Caco-2 (cell line): ENCODE measurements at regions of chr12 and their contacts with region 1.

Region 1: GRCh38 chr12:47651368-47652254 is 54.2 kb downstream of the RPAP3 start:
- DNase-seq: peak; percentile 62 to 72
- H3K4me3 ChIP-seq: no peak overlapping the region
- H3K4me3 Mint-ChIP-seq: no peak overlapping the region
- H3K27ac Mint-ChIP-seq: peak overlapping the region; percentile 58
- H3K4me1 ChIP-seq: peaks cover 14% of the 10 kb centered on the region
- H3K4me1 Mint-ChIP-seq: peaks cover 6% of the 10 kb centered on the region
- H3K27me3 ChIP-seq: no peaks in the 10 kb centered on the region
- H3K27me3 Mint-ChIP-seq: no peaks in the 10 kb centered on the region
- CTCF ChIP-seq: peak; percentile 66 to 75

Region 2: DNA sequence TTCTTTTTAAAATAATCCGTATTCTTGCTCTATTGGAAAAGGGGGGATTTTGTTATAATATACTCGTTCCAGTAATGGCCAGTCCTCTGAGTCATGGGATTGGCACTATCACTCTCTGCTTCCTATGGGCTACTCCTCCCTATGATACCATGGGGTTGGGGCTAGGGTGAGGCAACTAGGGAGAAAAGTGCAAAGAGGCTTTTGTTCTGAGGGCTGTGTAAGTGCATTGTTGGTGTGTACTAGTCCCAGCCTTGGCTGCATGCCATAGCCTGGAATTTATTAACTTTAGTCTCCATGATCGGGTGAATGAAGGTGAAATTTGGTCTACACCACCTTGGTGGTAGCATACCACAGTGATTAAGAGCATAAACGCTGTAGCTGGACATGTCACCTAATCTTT is 193.3 kb before region 1 on chr12:
- CTCF ChIA-PET with region 1: no interaction called
- POLR2A ChIA-PET with region 1: no interaction called
- intact Hi-C with region 1: no loop called
- DNase-seq: no peak
- H3K4me3 ChIP-seq: no peak overlapping the region
- H3K4me3 Mint-ChIP-seq: no peak overlapping the region
- H3K27ac Mint-ChIP-seq: no peak overlapping the region
- H3K4me1 ChIP-seq: no peaks in the 10 kb centered on the region
- H3K4me1 Mint-ChIP-seq: no peaks in the 10 kb centered on the region
- H3K27me3 ChIP-seq: no peaks in the 10 kb centered on the region
- H3K27me3 Mint-ChIP-seq: peaks cover 15% of the 10 kb centered on the region
- CTCF ChIP-seq: no peak

Region 3: DNA sequence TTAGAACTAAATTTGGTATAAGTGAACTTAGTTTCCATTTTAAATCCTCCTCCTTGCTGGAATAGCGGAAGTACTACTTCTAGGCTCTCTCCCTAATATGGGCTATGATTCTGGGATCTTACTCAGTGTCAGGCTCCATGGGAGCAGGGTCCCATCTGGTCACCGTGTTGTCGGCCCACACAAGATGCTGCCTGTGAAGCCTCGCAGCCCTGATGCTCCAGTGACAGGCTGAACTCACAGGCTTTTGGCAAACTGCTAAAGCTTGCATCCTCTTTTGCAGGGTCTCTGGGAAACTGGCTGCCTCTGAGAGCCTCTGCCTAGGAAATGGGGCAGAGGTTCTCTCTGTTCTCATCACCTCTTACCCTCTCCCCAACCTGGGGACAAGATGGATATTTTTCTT is 34.1 kb before region 1 on chr12:
- CTCF ChIA-PET with region 1: no interaction called
- POLR2A ChIA-PET with region 1: no interaction called
- intact Hi-C with region 1: no loop called
- DNase-seq: no peak
- H3K4me3 ChIP-seq: no peak overlapping the region
- H3K4me3 Mint-ChIP-seq: no peak overlapping the region
- H3K27ac Mint-ChIP-seq: no peak overlapping the region
- H3K4me1 ChIP-seq: no peaks in the 10 kb centered on the region; the same call in 1 of the 2 replicates
- H3K4me1 Mint-ChIP-seq: no peaks in the 10 kb centered on the region
- H3K27me3 ChIP-seq: no peaks in the 10 kb centered on the region
- H3K27me3 Mint-ChIP-seq: no peaks in the 10 kb centered on the region
- CTCF ChIP-seq: no peak

Region 4: DNA sequence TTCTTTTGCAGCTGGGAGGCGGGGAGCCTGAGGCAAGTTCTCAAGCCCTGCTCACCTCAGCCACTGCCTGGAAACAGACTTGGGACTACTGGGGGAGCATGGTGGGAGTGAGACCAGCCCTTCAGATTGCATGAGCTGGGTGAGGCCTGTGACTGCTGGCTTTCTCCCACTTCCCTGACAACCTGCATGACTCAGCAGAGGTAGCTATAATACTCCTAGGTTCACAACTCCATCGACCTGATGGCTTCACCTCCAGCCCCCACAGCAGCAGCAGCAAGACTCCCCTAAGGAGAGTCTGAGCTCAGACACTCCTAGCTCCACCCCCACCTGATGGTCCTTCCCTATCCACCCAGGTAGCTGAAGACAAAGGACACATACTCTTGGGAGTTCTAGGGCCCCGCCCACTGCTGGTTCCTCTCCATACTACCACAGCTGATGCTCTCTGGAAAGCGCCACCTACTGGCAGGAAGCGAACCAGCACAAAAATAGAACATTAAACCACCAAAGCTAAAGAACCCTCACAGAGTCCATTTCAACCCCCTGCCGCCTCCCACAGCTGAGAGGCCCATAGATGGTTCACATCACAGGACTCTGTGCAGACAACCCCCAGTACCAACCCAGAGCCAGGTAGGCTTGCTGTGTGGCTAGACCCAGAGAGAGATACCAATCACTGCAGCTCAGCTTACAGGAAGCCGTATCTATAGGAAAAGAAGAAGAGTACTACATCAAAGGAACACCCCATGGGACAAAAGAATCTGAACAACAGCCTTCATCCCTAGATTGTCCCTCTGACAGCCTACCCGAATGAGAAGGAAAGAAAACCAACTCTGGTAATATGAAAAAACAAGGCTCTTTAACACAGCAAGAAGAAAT is 14.5 kb before region 1 on chr12:
- CTCF ChIA-PET with region 1: interaction called, 11 read pairs
- POLR2A ChIA-PET with region 1: no interaction called
- intact Hi-C with region 1: no loop called
- DNase-seq: peak; percentile 66 to 75
- H3K4me3 ChIP-seq: no peak overlapping the region
- H3K4me3 Mint-ChIP-seq: no peak overlapping the region
- H3K27ac Mint-ChIP-seq: no peak overlapping the region
- H3K4me1 ChIP-seq: no peaks in the 10 kb centered on the region
- H3K4me1 Mint-ChIP-seq: no peaks in the 10 kb centered on the region
- H3K27me3 ChIP-seq: no peaks in the 10 kb centered on the region
- H3K27me3 Mint-ChIP-seq: no peaks in the 10 kb centered on the region
- CTCF ChIP-seq: peak; percentile 54 to 68

Region 5: GRCh38 chr12:47686645-47687240 is 35.1 kb after region 1 on chr12:
- CTCF ChIA-PET with region 1: interaction called, 24 read pairs
- POLR2A ChIA-PET with region 1: no interaction called
- intact Hi-C with region 1: loop called (anchors 1 kb)
- DNase-seq: peak in 1 of 2 experiments; percentile 49
- H3K4me3 ChIP-seq: no peak overlapping the region
- H3K4me3 Mint-ChIP-seq: no peak overlapping the region
- H3K27ac Mint-ChIP-seq: no peak overlapping the region
- H3K4me1 ChIP-seq: no peaks in the 10 kb centered on the region; the same call in 1 of the 2 replicates
- H3K4me1 Mint-ChIP-seq: no peaks in the 10 kb centered on the region
- H3K27me3 ChIP-seq: no peaks in the 10 kb centered on the region
- H3K27me3 Mint-ChIP-seq: no peaks in the 10 kb centered on the region
- CTCF ChIP-seq: peak; percentile 56 to 86

Region 6: GRCh38 chr12:47779301-47779942 is 127.8 kb after region 1 on chr12:
- CTCF ChIA-PET with region 1: no interaction called
- POLR2A ChIA-PET with region 1: no interaction called
- intact Hi-C with region 1: loop called (anchors 1 kb)
- DNase-seq: peak; percentile 88 to 94
- H3K4me3 ChIP-seq: no peak overlapping the region
- H3K4me3 Mint-ChIP-seq: no peak overlapping the region
- H3K27ac Mint-ChIP-seq: peak overlapping the region; percentile 34
- H3K4me1 ChIP-seq: peaks cover 9% of the 10 kb centered on the region; the same call in 1 of the 2 replicates
- H3K4me1 Mint-ChIP-seq: peaks cover 19% of the 10 kb centered on the region
- H3K27me3 ChIP-seq: no peaks in the 10 kb centered on the region
- H3K27me3 Mint-ChIP-seq: no peaks in the 10 kb centered on the region
- CTCF ChIP-seq: peak; percentile 97 to 99